GM12878 (cell line): ENCODE measurements at regions of chr3 and their contacts with region 1.

Region 1: GRCh38 chr3:185733980-185734724 is 90.7 kb downstream of the IGF2BP2 start:
- DNase-seq: no peak
- ATAC-seq: peak; percentile 81
- H3K4me3 ChIP-seq: no peak overlapping the region
- H3K27ac ChIP-seq: no peak overlapping the region
- H3K4me1 ChIP-seq: peaks cover 5% of the 10 kb centered on the region; the same call in 1 of the 2 replicates
- H3K27me3 ChIP-seq: no peaks in the 10 kb centered on the region
- CTCF ChIP-seq: peak; percentile 49 to 58 (median 49); a peak in 4 of 6 replicates
- EP300 ChIP-seq: no peak
- POLR2A ChIP-seq: no peak
- RAD21 ChIP-seq: peak; percentile 80

Region 2: GRCh38 chr3:185253645-185254410 is 480.3 kb before region 1 on chr3 and contains the start of gene EHHADH:
- CTCF ChIA-PET with region 1: no interaction called
- POLR2A ChIA-PET with region 1: no interaction called
- RAD21 ChIA-PET with region 1: no interaction called
- SMC1A ChIA-PET with region 1: no interaction called
- in situ Hi-C with region 1: no loop called
- intact Hi-C with region 1: no loop called
- DNase-seq: no peak
- ATAC-seq: peak; percentile 98
- H3K4me3 ChIP-seq: peak within 1 kb of the TSS; percentile 92
- H3K27ac ChIP-seq: peak within 1 kb of the TSS; percentile 52
- H3K4me1 ChIP-seq: no peaks in the 10 kb centered on the region
- H3K27me3 ChIP-seq: no peaks in the 10 kb centered on the region
- CTCF ChIP-seq: no peak
- EP300 ChIP-seq: no peak
- POLR2A ChIP-seq: peak; percentile 91
- RAD21 ChIP-seq: no peak
- polyA plus RNA-seq, gene EHHADH: 3.6 to 5.1 TPM

Region 3: DNA sequence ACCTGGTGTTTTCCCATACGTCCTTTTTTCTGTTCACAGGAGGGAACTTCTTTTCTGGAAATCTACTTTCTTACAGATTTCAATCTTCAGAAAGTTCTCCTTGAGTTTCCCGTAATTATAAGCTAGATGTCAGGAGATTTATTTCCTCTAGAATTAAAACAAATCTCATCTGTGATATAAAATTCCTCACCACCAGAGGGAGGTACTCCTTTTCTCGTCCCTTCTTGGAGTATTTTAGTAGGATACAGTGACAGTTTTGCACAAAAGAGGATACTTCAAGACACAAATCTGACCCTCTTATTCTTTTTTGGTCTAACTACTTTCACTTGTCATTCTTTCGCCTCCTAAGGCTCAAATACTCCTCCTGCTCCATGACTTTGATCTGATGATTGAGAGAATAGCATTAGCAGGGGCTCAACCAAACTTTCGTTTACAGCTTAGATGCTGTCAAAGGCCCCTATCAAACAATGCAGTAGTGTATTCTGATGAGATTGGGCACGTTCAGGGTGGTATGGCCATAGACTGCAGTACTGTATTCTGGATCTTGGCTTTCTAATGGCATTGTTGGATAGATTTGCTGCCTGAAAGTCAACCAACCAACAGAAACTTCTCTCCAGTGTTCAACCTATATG is 273.3 kb before region 1 on chr3:
- CTCF ChIA-PET with region 1: no interaction called
- POLR2A ChIA-PET with region 1: no interaction called
- RAD21 ChIA-PET with region 1: no interaction called
- SMC1A ChIA-PET with region 1: no interaction called
- in situ Hi-C with region 1: no loop called
- intact Hi-C with region 1: no loop called
- DNase-seq: no peak
- ATAC-seq: no peak
- H3K4me3 ChIP-seq: no peak overlapping the region
- H3K27ac ChIP-seq: no peak overlapping the region
- H3K4me1 ChIP-seq: no peaks in the 10 kb centered on the region
- H3K27me3 ChIP-seq: no peaks in the 10 kb centered on the region
- CTCF ChIP-seq: peak; percentile 11 to 28 (median 23); a peak in 2 of 6 replicates
- EP300 ChIP-seq: no peak
- POLR2A ChIP-seq: no peak
- RAD21 ChIP-seq: no peak

Region 4: DNA sequence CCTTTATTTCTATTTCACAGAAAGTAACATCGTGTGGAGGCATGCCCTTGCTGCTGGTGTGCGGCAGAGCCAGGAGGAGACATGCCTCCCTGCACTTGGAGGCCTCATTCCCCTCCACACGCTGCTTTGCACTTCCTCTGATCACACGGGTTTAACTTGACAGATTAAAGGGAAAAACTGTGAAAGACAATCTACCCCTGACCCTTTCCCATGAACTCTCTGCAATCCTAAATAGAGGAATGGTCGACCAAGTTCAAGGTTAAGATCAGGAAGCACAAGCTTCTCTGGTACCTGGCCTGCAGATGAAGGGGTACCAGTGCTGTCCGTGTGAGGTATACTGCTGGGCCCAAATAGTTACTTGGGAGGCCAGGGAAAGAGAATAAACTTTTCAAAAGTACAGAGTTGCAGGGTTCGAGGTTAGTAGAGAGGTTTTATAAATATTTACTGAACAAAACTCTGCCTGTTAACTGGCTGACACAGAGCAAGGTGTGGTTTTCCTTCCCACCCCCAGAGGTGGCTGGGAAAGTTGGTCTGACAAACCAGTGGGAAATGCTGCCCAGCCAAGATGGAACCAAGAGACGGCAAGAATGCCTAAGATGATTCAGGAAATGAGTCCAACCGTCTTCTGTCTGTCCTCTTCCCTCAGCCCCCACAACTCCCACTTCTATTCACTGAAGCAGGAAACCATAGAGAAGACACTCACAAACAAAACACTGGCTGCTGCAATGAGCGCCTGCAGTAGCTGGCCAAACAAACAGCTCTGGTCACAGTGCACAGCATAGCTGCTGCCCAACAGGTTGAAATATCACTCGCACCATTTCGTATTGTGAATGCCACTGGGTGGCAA is 11.1 kb after region 1 on chr3:
- CTCF ChIA-PET with region 1: interaction called, 12 read pairs
- POLR2A ChIA-PET with region 1: interaction called, 6 read pairs
- RAD21 ChIA-PET with region 1: interaction called, 5 read pairs
- SMC1A ChIA-PET with region 1: interaction called, 5 read pairs
- in situ Hi-C with region 1: no loop called
- intact Hi-C with region 1: no loop called
- DNase-seq: peak; percentile 17
- ATAC-seq: peak; percentile 71
- H3K4me3 ChIP-seq: no peak overlapping the region
- H3K27ac ChIP-seq: peak overlapping the region; percentile 9; the same call in 1 of the 2 replicates
- H3K4me1 ChIP-seq: peaks cover 14% of the 10 kb centered on the region
- H3K27me3 ChIP-seq: no peaks in the 10 kb centered on the region; a peak in 1 of 4 replicates
- CTCF ChIP-seq: no peak
- EP300 ChIP-seq: no peak
- POLR2A ChIP-seq: no peak
- RAD21 ChIP-seq: no peak

Region 5: GRCh38 chr3:185764163-185764979 is 30.2 kb after region 1 on chr3:
- CTCF ChIA-PET with region 1: interaction called, 40 read pairs
- POLR2A ChIA-PET with region 1: no interaction called
- RAD21 ChIA-PET with region 1: interaction called, 32 read pairs
- SMC1A ChIA-PET with region 1: interaction called, 39 read pairs
- in situ Hi-C with region 1: no loop called
- intact Hi-C with region 1: loop called (anchors 2 kb)
- DNase-seq: no peak
- ATAC-seq: peak; percentile 73
- H3K4me3 ChIP-seq: no peak overlapping the region
- H3K27ac ChIP-seq: no peak overlapping the region
- H3K4me1 ChIP-seq: no peaks in the 10 kb centered on the region
- H3K27me3 ChIP-seq: peaks cover 0 to 4% of the 10 kb centered on the region in 2 experiments; a peak in 3 of 4 replicates
- CTCF ChIP-seq: no peak
- EP300 ChIP-seq: no peak
- POLR2A ChIP-seq: no peak
- RAD21 ChIP-seq: no peak

Region 6: GRCh38 chr3:185770109-185770508 is 36.0 kb after region 1 on chr3:
- CTCF ChIA-PET with region 1: interaction called, 40 read pairs
- POLR2A ChIA-PET with region 1: no interaction called
- RAD21 ChIA-PET with region 1: interaction called, 32 read pairs
- SMC1A ChIA-PET with region 1: interaction called, 39 read pairs
- in situ Hi-C with region 1: no loop called
- intact Hi-C with region 1: loop called (anchors 2 kb)
- DNase-seq: no peak
- ATAC-seq: no peak
- H3K4me3 ChIP-seq: no peak overlapping the region
- H3K27ac ChIP-seq: no peak overlapping the region
- H3K4me1 ChIP-seq: no peaks in the 10 kb centered on the region
- H3K27me3 ChIP-seq: no peaks in the 10 kb centered on the region; a peak in 1 of 4 replicates
- CTCF ChIP-seq: no peak
- EP300 ChIP-seq: no peak
- POLR2A ChIP-seq: no peak
- RAD21 ChIP-seq: no peak

Region 7: GRCh38 chr3:185958626-185959025 is 224.5 kb after region 1 on chr3:
- CTCF ChIA-PET with region 1: no interaction called
- POLR2A ChIA-PET with region 1: no interaction called
- RAD21 ChIA-PET with region 1: no interaction called
- SMC1A ChIA-PET with region 1: no interaction called
- in situ Hi-C with region 1: no loop called
- intact Hi-C with region 1: no loop called
- DNase-seq: no peak
- ATAC-seq: no peak
- H3K4me3 ChIP-seq: no peak overlapping the region
- H3K27ac ChIP-seq: no peak overlapping the region
- H3K4me1 ChIP-seq: no peaks in the 10 kb centered on the region
- H3K27me3 ChIP-seq: no peaks in the 10 kb centered on the region
- CTCF ChIP-seq: no peak
- EP300 ChIP-seq: no peak
- POLR2A ChIP-seq: no peak
- RAD21 ChIP-seq: no peak